Prostate gland (tissue), 2 donors: ENCODE measurements at regions of chr5 and their contacts with region 1.

Region 1: DNA sequence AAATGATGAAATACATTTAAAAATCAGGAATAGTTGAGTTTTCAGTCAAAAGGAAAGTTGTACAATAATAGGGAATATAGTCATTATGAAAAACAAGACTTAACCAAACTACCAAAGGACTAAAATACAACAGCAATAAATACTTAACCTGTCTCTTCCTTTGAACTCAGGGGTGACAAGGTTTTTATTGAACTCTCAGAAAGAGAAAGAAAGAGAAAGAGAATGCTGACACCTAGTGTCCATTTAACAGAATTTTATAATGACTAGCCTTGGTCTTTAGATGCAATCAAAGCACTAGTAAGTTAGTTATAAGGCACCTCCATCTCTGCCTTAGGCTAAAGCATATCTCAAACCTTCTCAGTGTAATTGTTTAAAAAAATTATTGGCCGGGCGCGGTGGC is 47.5 kb downstream of the UIMC1 start:
- DNase-seq: no peak
- H3K4me3 ChIP-seq: no peak overlapping the region
- H3K27ac ChIP-seq: no peak overlapping the region
- H3K4me1 ChIP-seq: peaks cover 5% of the 10 kb centered on the region
- H3K27me3 ChIP-seq: no peaks in the 10 kb centered on the region
- CTCF ChIP-seq: peak in 3 of 4 experiments; percentile 44 to 57 (median 55)
- POLR2A ChIP-seq: no peak

Region 2: DNA sequence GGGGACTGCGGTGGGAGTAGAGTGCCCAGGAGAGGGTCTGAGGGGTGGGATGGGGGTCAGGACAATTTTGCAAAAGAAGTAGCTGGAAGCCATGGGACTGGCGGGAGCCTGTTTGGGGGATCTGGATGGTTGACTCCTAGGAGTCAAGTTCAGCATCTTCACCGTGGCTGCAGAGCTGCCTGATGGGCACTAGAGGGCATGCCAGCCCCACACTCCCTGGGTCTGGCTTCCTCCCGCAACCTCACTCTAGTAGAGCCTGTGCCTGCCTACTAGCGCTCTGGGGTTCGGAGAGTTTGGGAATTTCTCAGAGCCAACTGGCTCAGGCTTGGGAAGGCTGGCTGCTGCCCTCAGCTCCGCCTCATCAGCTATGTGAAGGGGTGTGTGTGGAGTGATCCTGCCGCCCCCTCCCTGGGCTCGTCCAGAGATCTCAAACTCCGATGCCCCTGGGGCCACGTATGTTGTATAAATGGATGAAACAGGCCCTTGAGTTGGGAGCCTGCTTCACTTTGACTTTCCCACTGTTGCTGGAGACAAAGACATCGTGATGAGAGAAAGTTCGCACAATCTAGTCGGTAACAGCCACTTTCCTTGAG is 300.9 kb before region 1 on chr5:
- intact Hi-C with region 1: loop called (anchors 5 kb)
- DNase-seq: peak; percentile 58
- H3K4me3 ChIP-seq: no peak overlapping the region
- H3K27ac ChIP-seq: no peak overlapping the region
- H3K4me1 ChIP-seq: no peaks in the 10 kb centered on the region
- H3K27me3 ChIP-seq: no peaks in the 10 kb centered on the region
- CTCF ChIP-seq: peak in 3 of 4 experiments; percentile 34 to 74 (median 61)
- POLR2A ChIP-seq: no peak